PC-3 (cell line): ENCODE measurements at regions of chr12 and their contacts with region 1.

Region 1: GRCh38 chr12:29350080-29350479 is 30.9 kb downstream of the ERGIC2 start:
- DNase-seq: peak; percentile 94
- ATAC-seq: peak; percentile 88
- H3K4me3 ChIP-seq: no peak overlapping the region
- H3K27ac ChIP-seq: no peak overlapping the region
- H3K4me1 ChIP-seq: peaks cover 11% of the 10 kb centered on the region
- H3K27me3 ChIP-seq: no peaks in the 10 kb centered on the region
- CTCF ChIP-seq: no peak

Region 2: GRCh38 chr12:29191267-29191845 is 158.7 kb before region 1 on chr12:
- CTCF ChIA-PET with region 1: no interaction called
- POLR2A ChIA-PET with region 1: no interaction called
- intact Hi-C with region 1: no loop called
- DNase-seq: no peak
- ATAC-seq: no peak
- H3K4me3 ChIP-seq: no peak overlapping the region
- H3K27ac ChIP-seq: no peak overlapping the region
- H3K4me1 ChIP-seq: no peaks in the 10 kb centered on the region
- H3K27me3 ChIP-seq: no peaks in the 10 kb centered on the region
- CTCF ChIP-seq: no peak

Region 3: GRCh38 chr12:29365091-29365490 is 15.0 kb after region 1 on chr12:
- CTCF ChIA-PET with region 1: no interaction called
- POLR2A ChIA-PET with region 1: no interaction called
- intact Hi-C with region 1: loop called (anchors 1 kb)
- DNase-seq: no peak
- ATAC-seq: no peak
- H3K4me3 ChIP-seq: no peak overlapping the region
- H3K27ac ChIP-seq: no peak overlapping the region
- H3K4me1 ChIP-seq: no peaks in the 10 kb centered on the region
- H3K27me3 ChIP-seq: no peaks in the 10 kb centered on the region
- CTCF ChIP-seq: no peak

Region 4: DNA sequence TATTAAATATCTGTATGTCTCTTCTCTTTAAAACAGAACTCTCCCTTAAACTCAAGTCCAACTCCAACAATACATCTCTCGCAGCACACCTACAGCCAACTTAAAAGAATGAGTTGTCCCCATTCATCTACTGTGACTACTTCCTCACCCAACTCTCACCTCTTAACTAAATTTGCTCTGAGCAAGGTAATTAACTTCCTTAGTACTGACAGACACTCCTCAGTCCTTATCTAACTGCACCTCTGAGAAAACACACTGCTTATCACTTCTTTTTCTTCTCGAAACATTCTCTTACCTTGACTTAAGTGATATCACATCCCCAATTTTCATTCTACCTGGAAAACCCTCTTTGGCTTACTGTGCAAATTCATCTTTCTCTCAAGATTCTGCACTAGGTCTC is 23.9 kb after region 1 on chr12:
- CTCF ChIA-PET with region 1: interaction called, 3 read pairs
- POLR2A ChIA-PET with region 1: no interaction called
- intact Hi-C with region 1: loop called (anchors 2 kb)
- DNase-seq: no peak
- ATAC-seq: no peak
- H3K4me3 ChIP-seq: no peak overlapping the region
- H3K27ac ChIP-seq: no peak overlapping the region
- H3K4me1 ChIP-seq: peaks cover 6% of the 10 kb centered on the region
- H3K27me3 ChIP-seq: no peaks in the 10 kb centered on the region
- CTCF ChIP-seq: no peak